ENCODE measurements at regions of chr1 and their contacts with region 1.

Region 1: DNA sequence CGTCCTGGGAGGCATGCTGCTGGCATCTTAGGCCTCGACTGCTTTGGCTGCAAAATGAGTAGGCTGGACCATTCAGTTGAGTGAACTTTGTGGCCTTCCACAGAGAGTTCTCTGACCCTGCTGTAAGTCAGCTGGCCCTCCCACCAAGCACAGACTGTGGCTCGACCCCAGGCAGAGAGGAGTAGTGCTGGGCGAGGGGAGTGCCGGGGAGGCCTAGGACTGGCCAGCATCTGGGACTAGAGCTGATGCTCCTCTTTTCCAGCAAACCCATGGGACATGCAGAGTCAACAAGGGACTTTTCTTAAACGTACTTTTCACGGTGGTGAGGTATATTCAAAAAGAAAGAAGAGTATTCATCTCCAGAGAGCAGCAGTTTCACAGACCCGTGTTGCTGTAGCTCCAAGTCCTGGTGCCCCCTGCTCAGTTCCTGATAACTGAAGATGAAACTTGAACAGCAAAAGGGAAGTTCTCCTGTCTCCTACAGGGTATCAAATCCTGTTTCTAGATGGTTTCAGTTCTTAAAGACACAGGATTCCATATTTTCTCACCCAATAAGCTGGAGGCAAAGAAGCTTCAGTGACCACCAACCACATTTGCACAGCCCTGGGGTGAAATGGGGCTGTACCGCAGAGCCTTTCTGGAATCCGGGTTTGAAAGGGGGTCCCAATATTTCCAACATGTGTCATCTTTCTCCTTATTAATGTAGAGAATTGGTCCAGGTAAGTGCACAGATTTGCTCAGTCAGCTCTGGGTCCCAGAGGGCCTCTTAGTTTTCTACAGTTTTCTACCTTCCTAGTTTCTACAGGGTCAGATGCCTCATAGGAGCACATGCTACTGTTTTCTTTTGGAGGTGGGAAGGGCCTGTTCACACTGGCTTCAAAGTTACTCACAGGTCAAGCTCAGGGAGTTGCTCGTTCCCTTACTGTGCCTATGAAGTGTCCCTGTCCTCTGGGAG is 20.9 kb downstream of the BATF3 start:
- DNase-seq: no peak
- H3K4me3 Mint-ChIP-seq: no peak overlapping the region
- H3K27ac Mint-ChIP-seq: peak overlapping the region; percentile 75
- H3K4me1 Mint-ChIP-seq: peaks cover 55% of the 10 kb centered on the region
- H3K27me3 Mint-ChIP-seq: no peaks in the 10 kb centered on the region

Region 2: DNA sequence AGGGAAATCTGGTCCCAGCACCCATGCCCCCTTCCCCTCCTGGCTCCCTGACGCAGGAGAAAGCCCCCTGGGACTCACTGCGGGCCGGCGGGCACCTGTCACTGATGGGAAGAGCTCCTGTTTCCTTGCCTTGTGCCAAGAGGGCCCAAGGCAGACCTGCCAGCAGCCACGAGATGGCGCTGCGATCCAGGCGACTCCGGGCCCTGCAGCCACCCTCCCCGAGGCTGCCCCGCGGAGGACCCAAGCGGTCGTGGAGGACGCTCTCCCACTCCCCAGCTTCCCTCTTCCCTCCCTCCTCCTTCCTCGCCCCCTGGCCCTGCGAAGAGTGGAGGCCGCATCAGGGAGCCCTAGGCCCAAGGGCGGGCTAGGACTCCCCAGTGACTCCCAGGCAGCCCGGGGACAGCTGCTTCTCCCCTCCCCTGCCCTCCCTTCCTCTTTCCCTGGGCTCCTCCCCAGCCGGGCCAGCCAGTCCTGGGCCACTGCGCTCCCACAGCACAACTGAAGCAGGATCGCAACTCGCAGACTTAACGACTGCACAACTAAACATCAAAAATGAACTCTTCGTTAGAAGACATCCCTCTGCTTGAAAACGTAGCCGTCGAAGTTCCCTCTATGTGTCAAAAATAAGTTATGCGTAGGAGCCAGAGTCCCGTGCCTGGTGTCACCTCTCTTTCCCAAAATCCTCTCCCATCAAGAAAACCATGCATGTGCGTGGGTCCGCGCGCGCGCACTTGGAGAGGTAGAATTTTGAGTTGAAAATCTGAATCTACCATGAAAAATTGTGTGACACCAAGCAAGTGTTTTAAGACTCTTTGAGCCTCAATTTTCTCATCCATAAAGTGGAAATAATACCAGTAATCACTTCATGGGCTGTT is 13.3 kb before region 1 on chr1:
- intact Hi-C with region 1: loop called (anchors 2 kb)
- DNase-seq: peak; percentile 74
- H3K4me3 Mint-ChIP-seq: peak overlapping the region; percentile 82
- H3K27ac Mint-ChIP-seq: peak overlapping the region; percentile 70
- H3K4me1 Mint-ChIP-seq: peaks cover 24% of the 10 kb centered on the region
- H3K27me3 Mint-ChIP-seq: peaks cover 13% of the 10 kb centered on the region

Region 3: GRCh38 chr1:212721388-212722247 is 42.9 kb after region 1 on chr1:
- intact Hi-C with region 1: loop called (anchors 1 kb)
- DNase-seq: peak; percentile 39
- H3K4me3 Mint-ChIP-seq: peak overlapping the region; percentile 34
- H3K27ac Mint-ChIP-seq: peak overlapping the region; percentile 82
- H3K4me1 Mint-ChIP-seq: peaks cover 44% of the 10 kb centered on the region
- H3K27me3 Mint-ChIP-seq: peaks cover 6% of the 10 kb centered on the region

Region 4: DNA sequence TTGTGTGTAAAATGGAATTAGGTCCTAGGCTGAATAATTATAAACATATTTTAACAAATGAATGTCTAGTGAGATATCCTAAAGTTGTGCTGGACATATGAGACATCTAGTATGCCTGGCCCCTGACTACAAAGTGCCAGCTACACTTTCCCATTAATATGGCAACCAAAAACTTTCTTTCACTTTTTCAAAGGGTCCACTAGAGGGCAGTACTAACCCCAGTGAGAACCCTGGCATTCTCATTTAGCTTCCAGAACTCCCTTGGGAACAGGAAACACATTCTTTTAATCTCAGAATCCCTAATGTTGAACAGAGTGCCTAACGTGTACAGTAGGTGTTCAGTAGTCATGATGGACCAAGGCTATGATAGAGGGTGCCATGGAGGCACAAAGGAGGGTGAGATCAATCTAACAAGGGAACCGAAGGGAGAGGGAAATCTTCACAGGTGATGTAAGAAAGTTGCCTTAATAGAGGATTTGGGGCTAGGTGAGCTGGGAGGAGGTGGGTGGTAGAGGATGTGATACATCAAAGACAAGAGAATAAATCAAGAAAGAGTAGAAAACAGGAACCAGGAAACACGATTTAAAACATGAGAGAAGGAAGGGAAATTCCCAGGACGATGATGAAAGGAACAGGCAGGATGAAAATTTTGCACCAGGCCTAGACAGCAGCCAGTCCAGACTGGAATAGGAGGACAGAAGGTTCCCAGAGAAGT is 71.2 kb after region 1 on chr1:
- intact Hi-C with region 1: loop called (anchors 1 kb)
- DNase-seq: no peak
- H3K4me3 Mint-ChIP-seq: peak overlapping the region; percentile 8
- H3K27ac Mint-ChIP-seq: peak overlapping the region; percentile 76
- H3K4me1 Mint-ChIP-seq: peaks cover 55% of the 10 kb centered on the region
- H3K27me3 Mint-ChIP-seq: peaks cover 2% of the 10 kb centered on the region